ENCODE measurements at regions of chr2 and their contacts with region 1.

Region 1: DNA sequence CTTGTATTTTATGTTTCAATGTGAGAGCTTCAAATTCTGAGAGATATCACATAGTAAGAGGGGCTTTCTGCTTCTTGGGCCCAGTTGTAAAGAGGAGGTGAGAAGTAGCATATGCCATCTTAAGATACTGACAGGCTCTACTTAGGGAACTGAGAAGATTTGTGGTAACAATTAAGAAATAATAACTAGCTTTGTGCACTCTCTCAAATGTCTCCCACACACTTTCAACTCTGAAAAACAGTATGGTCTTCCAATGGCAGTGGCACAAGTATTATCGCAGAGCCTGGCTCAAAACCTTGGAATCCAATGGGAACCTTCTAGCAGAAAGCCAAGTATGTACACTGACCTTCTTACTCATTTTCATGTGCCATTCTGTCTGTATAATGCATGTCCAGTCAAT is 80.3 kb upstream of the FAM237A start:
- DNase-seq: no peak
- H3K4me3 ChIP-seq: no peak overlapping the region
- H3K27ac ChIP-seq: no peak overlapping the region
- H3K4me1 ChIP-seq: no peaks in the 10 kb centered on the region
- H3K27me3 ChIP-seq: no peaks in the 10 kb centered on the region
- CTCF ChIP-seq: no peak
- POLR2A ChIP-seq: no peak

Region 2: GRCh38 chr2:206004004-206004693 is 557.8 kb before region 1 on chr2:
- intact Hi-C with region 1: loop called (anchors 10 kb)
- DNase-seq: no peak
- H3K4me3 ChIP-seq: no peak overlapping the region
- H3K27ac ChIP-seq: no peak overlapping the region
- H3K4me1 ChIP-seq: no peaks in the 10 kb centered on the region
- H3K27me3 ChIP-seq: no peaks in the 10 kb centered on the region
- CTCF ChIP-seq: no peak
- POLR2A ChIP-seq: no peak

Region 3: DNA sequence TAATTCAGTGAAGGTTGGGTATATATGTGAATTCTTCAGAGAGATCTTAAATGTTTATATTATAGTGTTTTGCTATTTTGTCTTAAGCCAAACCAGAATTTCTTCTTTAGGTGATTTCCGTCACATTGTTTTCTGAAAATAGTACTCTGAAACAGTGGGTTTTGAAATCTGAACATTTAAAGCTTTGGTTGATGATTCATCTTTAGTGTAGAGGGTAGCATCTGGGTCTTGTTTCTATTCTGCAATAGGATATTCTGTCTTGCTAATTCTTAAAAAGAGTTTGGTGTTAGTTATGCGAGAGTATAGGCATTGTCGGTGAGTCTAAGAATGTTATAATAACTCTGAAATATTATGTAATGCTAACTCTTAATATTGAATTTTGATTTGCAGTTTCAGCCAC is 10.8 kb after region 1 on chr2:
- intact Hi-C with region 1: no loop called
- DNase-seq: no peak
- H3K4me3 ChIP-seq: no peak overlapping the region
- H3K27ac ChIP-seq: no peak overlapping the region
- H3K4me1 ChIP-seq: no peaks in the 10 kb centered on the region
- H3K27me3 ChIP-seq: no peaks in the 10 kb centered on the region
- CTCF ChIP-seq: no peak
- POLR2A ChIP-seq: no peak

Region 4: DNA sequence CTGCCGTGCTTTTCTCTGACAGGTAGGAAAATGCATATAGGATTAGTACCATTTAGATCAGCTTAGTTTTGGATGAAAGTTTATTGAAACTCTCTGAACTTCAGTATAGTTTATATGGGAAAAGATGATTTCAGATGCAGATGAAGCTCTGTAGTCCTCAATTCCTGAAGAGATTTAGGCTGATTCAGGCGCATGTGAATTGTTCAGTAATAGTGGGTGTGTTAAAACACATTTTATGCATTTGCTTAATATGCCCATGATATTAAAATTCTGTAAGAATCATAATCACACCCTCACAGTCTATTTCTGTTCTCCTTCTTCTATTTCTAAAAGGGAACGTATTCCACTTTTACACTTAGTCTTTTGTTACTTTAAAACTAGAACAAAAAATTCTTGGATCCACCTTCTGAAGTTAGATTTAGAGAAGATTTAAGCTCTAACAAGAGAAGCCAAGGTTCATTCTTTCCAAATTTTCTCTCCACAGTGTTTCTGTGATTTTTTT is 35.8 kb after region 1 on chr2:
- intact Hi-C with region 1: no loop called
- DNase-seq: no peak
- H3K4me3 ChIP-seq: no peak overlapping the region
- H3K27ac ChIP-seq: no peak overlapping the region
- H3K4me1 ChIP-seq: no peaks in the 10 kb centered on the region
- H3K27me3 ChIP-seq: no peaks in the 10 kb centered on the region
- CTCF ChIP-seq: no peak
- POLR2A ChIP-seq: no peak